Gastrocnemius medialis (tissue), 4 donors: ENCODE measurements at regions of chr3 and their contacts with region 1.

Region 1: GRCh38 chr3:47380601-47381316 is at the start of gene PTPN23:
- DNase-seq: peak; percentile 99
- ATAC-seq: peak; percentile 94 to 96
- H3K4me3 ChIP-seq: peak within 1 kb of the TSS; percentile 85 to 100 (median 94)
- H3K27ac ChIP-seq: peak within 1 kb of the TSS; percentile 96 to 100 (median 97)
- H3K4me1 ChIP-seq: peaks cover 39 to 46% of the 10 kb centered on the region in 2 donors
- H3K27me3 ChIP-seq: no peaks in the 10 kb centered on the region
- CTCF ChIP-seq: peak in 1 of 5 experiments; percentile 12
- POLR2A ChIP-seq: peak; percentile 97 to 99
- total RNA-seq, gene PTPN23: 10.5 to 37.3 (median 23.7) TPM

Region 2: DNA sequence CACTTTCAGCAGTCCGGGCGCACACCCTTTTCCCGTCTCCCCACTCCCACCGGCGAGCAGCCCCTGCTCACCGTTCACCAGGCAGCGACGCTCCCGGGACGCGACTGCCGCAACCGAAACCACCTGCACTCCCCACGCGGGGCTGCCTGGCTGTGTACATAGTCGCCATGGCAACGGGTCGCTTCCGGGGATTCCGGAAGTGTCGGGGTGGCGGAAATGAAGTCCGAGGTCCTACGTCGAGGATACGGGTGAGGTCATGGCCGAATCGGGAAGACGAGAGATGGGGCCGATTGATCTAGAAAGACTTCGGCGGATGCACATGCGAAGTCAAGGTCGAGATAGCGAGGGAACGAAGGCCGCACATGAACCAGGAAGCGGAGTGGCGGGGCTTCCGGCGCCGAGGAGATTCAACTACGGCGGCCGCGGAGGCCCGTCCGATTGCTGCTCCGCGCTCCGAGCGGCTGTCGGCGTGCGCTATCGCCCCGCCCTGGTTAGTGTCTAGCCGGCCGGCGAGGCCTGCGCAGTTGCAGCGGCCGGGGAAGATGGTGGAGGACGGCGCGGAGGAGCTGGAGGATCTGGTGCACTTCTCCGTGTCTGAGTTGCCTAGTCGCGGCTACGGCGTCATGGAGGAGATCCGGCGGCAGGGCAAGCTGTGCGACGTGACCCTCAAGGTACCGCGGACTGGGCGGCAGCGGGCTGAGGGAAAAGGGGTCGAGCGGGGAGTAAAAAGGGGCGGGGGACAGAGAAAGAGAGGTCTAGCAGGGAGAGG is 98.2 kb before region 1 on chr3 and contains the starts of genes KIF9 and KLHL18:
- in situ Hi-C with region 1: no loop called
- intact Hi-C with region 1: loop called (anchors 2 kb)
- DNase-seq: peak; percentile 86 to 90
- ATAC-seq: peak; percentile 96 to 97
- H3K4me3 ChIP-seq: peak within 1 kb of the TSS; percentile 70 to 92 (median 86)
- H3K27ac ChIP-seq: peak within 1 kb of the TSS; percentile 86 to 93 (median 91)
- H3K4me1 ChIP-seq: peaks cover 25 to 40% of the 10 kb centered on the region in 2 donors
- H3K27me3 ChIP-seq: no peaks in the 10 kb centered on the region
- CTCF ChIP-seq: peak in 1 of 5 experiments; percentile 29
- POLR2A ChIP-seq: peak; percentile 60 to 78
- total RNA-seq, gene KIF9: 2.9 to 10.8 (median 8.0) TPM
- total RNA-seq, gene KLHL18: 19.0 to 26.3 (median 22.4) TPM

Region 3: DNA sequence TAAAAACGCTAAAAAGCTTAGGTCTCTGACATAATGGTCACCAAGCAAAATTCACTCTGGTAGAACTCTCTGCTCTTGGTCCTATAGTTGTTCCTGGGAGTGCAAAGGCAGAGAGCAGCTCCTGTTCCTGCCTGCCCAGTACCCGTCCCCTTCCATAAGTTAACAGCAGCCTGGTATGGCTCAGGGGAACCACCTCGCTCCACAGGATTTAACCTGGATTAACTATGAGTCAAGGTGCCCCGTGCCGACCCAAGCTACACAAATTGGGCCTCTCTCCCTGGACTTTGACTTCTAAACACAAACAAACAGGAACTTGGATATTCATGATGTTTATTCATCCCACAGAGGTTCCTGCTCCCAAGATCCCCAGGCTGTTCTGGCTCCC is 62.8 kb after region 1 on chr3:
- in situ Hi-C with region 1: no loop called
- intact Hi-C with region 1: loop called (anchors 2 kb)
- DNase-seq: no peak
- ATAC-seq: peak; percentile 21 to 36
- H3K4me3 ChIP-seq: peak overlapping the region in 1 of 4 donors; percentile 2
- H3K27ac ChIP-seq: peak overlapping the region; percentile 74 to 91 (median 84)
- H3K4me1 ChIP-seq: peaks cover 24 to 40% of the 10 kb centered on the region in 2 donors
- H3K27me3 ChIP-seq: no peaks in the 10 kb centered on the region
- CTCF ChIP-seq: no peak
- POLR2A ChIP-seq: no peak